B cell (primary cell): ENCODE measurements at regions of chr19 and their contacts with region 1.

Region 1: GRCh38 chr19:16382775-16383543 is 58.3 kb downstream of the KLF2 start:
- DNase-seq: peak; percentile 86
- ATAC-seq: peak; percentile 68
- H3K4me3 ChIP-seq: peak overlapping the region in 4 of 5 experiments; percentile 2 to 33 (median 17)
- H3K4me3 Mint-ChIP-seq: peak overlapping the region; percentile 81
- H3K27ac ChIP-seq: peak overlapping the region; percentile 93 to 95
- H3K27ac Mint-ChIP-seq: peak overlapping the region; percentile 99
- H3K4me1 ChIP-seq: peaks cover 63 to 89% of the 10 kb centered on the region in 2 donors
- H3K4me1 Mint-ChIP-seq: peaks cover 81% of the 10 kb centered on the region
- H3K27me3 ChIP-seq: no peaks in the 10 kb centered on the region
- H3K27me3 Mint-ChIP-seq: no peaks in the 10 kb centered on the region
- CTCF ChIP-seq: peak; percentile 78

Region 2: GRCh38 chr19:16076154-16076957 is 306.6 kb before region 1 on chr19 and contains the start of gene TPM4:
- CTCF ChIA-PET with region 1: no interaction called
- POLR2A ChIA-PET with region 1: no interaction called
- intact Hi-C with region 1: loop called (anchors 10 kb)
- DNase-seq: peak; percentile 93
- ATAC-seq: peak; percentile 60
- H3K4me3 ChIP-seq: peak within 1 kb of the TSS; percentile 56 to 86 (median 73)
- H3K4me3 Mint-ChIP-seq: peak within 1 kb of the TSS; percentile 88
- H3K27ac ChIP-seq: peak within 1 kb of the TSS; percentile 91 to 92
- H3K27ac Mint-ChIP-seq: peak within 1 kb of the TSS; percentile 94
- H3K4me1 ChIP-seq: peaks cover 35 to 56% of the 10 kb centered on the region in 2 donors
- H3K4me1 Mint-ChIP-seq: peaks cover 60% of the 10 kb centered on the region
- H3K27me3 ChIP-seq: no peaks in the 10 kb centered on the region
- H3K27me3 Mint-ChIP-seq: no peaks in the 10 kb centered on the region
- CTCF ChIP-seq: no peak
- total RNA-seq, gene TPM4: 127 TPM in 2 replicates

Region 3: DNA sequence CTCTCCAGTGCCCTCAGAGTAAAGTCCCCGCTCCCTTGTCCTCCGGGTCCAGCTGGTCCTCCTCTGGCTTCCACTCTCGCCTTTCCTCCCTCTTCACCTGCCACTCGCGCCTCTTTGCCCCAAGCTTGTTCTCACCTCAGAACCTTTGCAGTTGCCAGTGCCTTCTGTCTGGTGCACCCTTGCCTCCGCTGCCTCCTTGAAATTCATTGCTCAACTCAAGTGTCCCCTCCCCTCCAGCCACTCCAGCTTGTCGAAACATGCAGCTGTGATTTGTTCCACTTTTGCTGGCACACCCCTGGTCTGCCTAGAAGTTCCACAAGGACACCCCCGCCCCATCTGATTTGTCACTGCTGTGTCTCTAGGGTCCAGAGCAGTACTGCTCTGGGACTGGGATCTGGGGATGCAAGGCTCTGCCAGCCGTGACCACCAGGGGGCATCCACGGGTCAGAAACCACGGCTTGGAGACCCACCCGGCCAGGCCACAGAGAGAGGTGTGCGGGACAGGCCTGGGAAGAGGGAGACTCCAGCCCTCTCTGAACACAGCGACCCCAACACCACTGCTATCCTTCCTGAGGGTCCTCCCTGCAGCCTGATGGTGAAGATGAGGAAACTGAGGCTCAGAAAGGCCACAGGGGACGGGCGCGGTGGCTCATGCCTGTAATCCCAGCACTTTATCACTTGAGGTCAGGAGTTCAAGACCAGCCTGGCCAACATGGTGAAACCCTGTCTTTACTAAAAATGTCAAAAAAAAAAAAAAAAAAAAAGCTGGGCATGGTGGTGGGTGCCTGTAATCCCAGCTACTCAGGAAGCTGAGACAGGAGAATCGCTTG is 135.4 kb before region 1 on chr19:
- CTCF ChIA-PET with region 1: interaction called, 110 read pairs
- POLR2A ChIA-PET with region 1: interaction called, 37 read pairs
- intact Hi-C with region 1: loop called (anchors 1 kb)
- DNase-seq: peak; percentile 88
- ATAC-seq: peak; percentile 88
- H3K4me3 ChIP-seq: no peak overlapping the region
- H3K4me3 Mint-ChIP-seq: peak overlapping the region; percentile 59
- H3K27ac ChIP-seq: peak overlapping the region; percentile 4 to 66
- H3K27ac Mint-ChIP-seq: peak overlapping the region; percentile 88
- H3K4me1 ChIP-seq: peaks cover 34 to 60% of the 10 kb centered on the region in 2 donors
- H3K4me1 Mint-ChIP-seq: peaks cover 34% of the 10 kb centered on the region
- H3K27me3 ChIP-seq: no peaks in the 10 kb centered on the region
- H3K27me3 Mint-ChIP-seq: no peaks in the 10 kb centered on the region
- CTCF ChIP-seq: peak; percentile 87

Region 4: DNA sequence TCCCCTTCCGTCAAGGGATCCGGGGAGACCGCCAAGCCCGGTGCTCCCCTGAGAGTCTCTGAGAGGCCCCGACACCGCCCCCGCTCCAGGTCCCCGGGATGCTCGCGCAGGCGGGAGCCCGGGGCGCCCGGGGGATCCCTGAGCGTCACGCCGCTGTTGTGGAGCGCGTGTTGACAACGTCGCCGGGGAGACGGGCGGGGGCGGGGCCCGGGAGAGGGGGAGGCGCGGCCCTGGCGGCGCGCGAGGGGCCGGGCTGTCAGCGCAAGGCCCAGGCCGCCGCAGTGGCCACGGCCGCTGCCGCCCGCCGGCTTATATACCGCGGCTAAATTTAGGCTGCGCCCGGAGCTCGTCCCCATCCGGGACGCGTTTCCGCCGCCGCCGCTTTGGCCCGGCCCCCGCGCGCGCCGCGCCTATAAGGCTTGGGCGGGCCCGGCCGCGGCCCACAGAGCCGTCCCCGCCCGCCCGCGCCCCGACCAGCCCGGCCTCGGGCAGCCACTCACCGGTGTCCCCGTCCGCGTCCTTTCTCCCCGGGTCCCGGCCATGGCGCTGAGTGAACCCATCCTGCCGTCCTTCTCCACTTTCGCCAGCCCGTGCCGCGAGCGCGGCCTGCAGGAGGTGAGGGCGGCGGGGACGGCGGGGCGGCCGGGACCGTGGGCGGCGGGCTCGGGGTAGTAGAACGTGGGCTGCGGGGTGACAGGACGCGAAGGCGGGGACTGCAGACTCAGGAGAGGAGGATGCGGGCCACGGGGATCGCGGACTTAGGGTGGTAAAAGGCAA is 58.4 kb before region 1 on chr19 and contains the start of gene KLF2:
- CTCF ChIA-PET with region 1: interaction called, 100 read pairs
- POLR2A ChIA-PET with region 1: interaction called, 87 read pairs
- intact Hi-C with region 1: loop called (anchors 1 kb)
- DNase-seq: peak; percentile 99
- ATAC-seq: peak; percentile 59
- H3K4me3 ChIP-seq: peak within 1 kb of the TSS; percentile 35 to 100 (median 98)
- H3K4me3 Mint-ChIP-seq: peak within 1 kb of the TSS; percentile 76
- H3K27ac ChIP-seq: peak within 1 kb of the TSS; percentile 99
- H3K27ac Mint-ChIP-seq: peak within 1 kb of the TSS; percentile 91
- H3K4me1 ChIP-seq: peaks cover 42 to 55% of the 10 kb centered on the region in 2 donors
- H3K4me1 Mint-ChIP-seq: peaks cover 61% of the 10 kb centered on the region
- H3K27me3 ChIP-seq: no peaks in the 10 kb centered on the region
- H3K27me3 Mint-ChIP-seq: no peaks in the 10 kb centered on the region
- CTCF ChIP-seq: no peak
- total RNA-seq, gene KLF2: 241 and 242 TPM in 2 replicates

Region 5: DNA sequence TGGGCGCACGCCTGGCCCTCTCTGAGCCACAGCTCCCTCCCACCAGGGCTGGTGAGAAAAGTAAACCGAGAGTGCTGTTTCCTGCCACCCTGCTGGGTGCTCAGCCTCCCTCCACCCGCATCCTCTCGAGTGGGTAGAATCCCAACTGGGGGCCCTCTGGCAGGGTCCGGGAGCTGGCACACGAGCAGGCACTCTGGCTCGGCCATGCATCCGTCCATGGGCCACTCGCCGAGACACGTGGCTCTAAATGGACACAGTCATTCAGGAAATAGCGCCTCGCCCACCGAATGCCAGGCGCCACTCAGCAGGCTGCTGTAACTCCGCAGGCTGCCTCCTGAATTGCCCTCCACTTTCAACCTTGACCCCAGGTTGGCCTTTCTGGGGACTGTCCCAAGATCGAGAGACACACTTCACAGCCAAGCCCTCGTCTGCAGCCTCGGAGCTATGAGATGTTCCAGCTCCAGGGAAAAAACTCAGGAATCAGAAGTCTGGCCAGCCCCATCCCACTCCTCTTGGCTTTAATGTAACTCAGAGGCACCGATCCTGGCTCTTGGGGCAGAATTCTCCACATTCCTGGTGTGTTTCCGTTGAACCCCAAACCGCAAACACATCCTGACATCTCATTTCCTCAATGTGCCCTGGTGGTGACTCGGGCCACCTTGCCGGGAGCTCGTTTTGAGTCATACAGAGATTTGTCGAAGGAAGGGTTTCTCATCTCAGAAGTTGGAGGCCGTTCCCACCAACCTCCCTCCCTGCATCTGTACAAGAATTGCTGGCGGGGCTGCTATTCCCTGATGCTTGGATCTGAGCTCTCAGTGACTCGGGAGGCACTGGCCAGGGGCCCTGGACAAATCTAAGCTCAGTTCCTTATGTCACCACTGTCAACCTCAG is 44.2 kb before region 1 on chr19:
- CTCF ChIA-PET with region 1: interaction called, 11 read pairs
- POLR2A ChIA-PET with region 1: interaction called, 9 read pairs
- intact Hi-C with region 1: loop called (anchors 1 kb)
- DNase-seq: peak; percentile 64
- ATAC-seq: no peak
- H3K4me3 ChIP-seq: peak overlapping the region in 4 of 5 experiments; percentile 10 to 49 (median 29)
- H3K4me3 Mint-ChIP-seq: peak overlapping the region; percentile 83
- H3K27ac ChIP-seq: peak overlapping the region; percentile 27 to 39
- H3K27ac Mint-ChIP-seq: peak overlapping the region; percentile 87
- H3K4me1 ChIP-seq: peaks cover 53 to 71% of the 10 kb centered on the region in 2 donors
- H3K4me1 Mint-ChIP-seq: peaks cover 61% of the 10 kb centered on the region
- H3K27me3 ChIP-seq: no peaks in the 10 kb centered on the region
- H3K27me3 Mint-ChIP-seq: no peaks in the 10 kb centered on the region
- CTCF ChIP-seq: peak; percentile 14

Region 6: DNA sequence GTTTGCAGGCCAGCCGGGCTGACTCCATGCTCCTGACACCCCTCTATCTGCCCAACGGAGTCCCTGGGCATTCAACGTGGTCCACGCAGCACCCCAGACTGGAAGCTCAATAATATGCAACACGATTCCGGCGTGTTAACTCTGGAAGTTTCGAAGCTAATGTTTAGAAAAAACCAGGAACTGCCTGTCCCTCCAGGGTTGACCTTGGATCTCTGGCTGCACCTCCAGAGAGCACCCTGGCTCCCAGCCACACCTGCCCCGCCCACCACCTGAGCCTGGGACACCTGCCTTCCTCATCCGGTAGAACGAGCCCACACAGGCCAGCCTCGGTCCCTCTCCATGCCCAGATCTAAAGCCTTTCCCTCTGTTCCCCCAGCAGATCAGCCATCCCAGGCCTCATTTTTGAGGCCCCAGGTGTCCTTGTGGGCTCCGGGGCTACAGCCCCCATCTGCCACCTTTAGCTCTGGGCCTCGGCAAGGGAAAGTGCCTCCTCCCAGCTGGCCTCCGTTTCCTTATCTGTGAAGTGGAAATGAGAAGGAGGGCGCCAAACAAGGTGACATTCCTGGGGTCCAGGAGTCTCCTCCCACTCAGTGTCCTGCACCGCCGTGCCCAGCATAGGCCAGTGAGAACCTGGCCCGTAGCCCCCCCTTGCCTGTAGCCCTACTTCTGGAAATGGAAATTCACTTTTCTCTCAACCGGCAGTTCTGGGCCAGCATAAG is 19.7 kb before region 1 on chr19:
- CTCF ChIA-PET with region 1: interaction called, 57 read pairs
- POLR2A ChIA-PET with region 1: interaction called, 43 read pairs
- intact Hi-C with region 1: loop called (anchors 1 kb)
- DNase-seq: peak; percentile 3
- ATAC-seq: no peak
- H3K4me3 ChIP-seq: no peak overlapping the region
- H3K4me3 Mint-ChIP-seq: peak overlapping the region; percentile 19
- H3K27ac ChIP-seq: no peak overlapping the region
- H3K27ac Mint-ChIP-seq: peak overlapping the region; percentile 53
- H3K4me1 ChIP-seq: peaks cover 82 to 98% of the 10 kb centered on the region in 2 donors
- H3K4me1 Mint-ChIP-seq: peaks cover 83% of the 10 kb centered on the region
- H3K27me3 ChIP-seq: no peaks in the 10 kb centered on the region
- H3K27me3 Mint-ChIP-seq: no peaks in the 10 kb centered on the region
- CTCF ChIP-seq: no peak

Region 7: GRCh38 chr19:16394681-16395375 is 11.9 kb after region 1 on chr19:
- CTCF ChIA-PET with region 1: interaction called, 34 read pairs
- POLR2A ChIA-PET with region 1: interaction called, 13 read pairs
- intact Hi-C with region 1: loop called (anchors 1 kb)
- DNase-seq: no peak
- ATAC-seq: no peak
- H3K4me3 ChIP-seq: no peak overlapping the region
- H3K4me3 Mint-ChIP-seq: no peak overlapping the region
- H3K27ac ChIP-seq: peak overlapping the region in 1 of 2 donors; percentile 2
- H3K27ac Mint-ChIP-seq: peak overlapping the region; percentile 79
- H3K4me1 ChIP-seq: peaks cover 48 to 57% of the 10 kb centered on the region in 2 donors
- H3K4me1 Mint-ChIP-seq: peaks cover 54% of the 10 kb centered on the region
- H3K27me3 ChIP-seq: no peaks in the 10 kb centered on the region
- H3K27me3 Mint-ChIP-seq: no peaks in the 10 kb centered on the region
- CTCF ChIP-seq: no peak

Region 8: GRCh38 chr19:16542045-16542909 is 159.3 kb after region 1 on chr19 and contains the start of gene CHERP:
- CTCF ChIA-PET with region 1: no interaction called
- POLR2A ChIA-PET with region 1: no interaction called
- intact Hi-C with region 1: no loop called
- DNase-seq: peak; percentile 97
- ATAC-seq: peak; percentile 81
- H3K4me3 ChIP-seq: peak within 1 kb of the TSS; percentile 76 to 90 (median 88)
- H3K4me3 Mint-ChIP-seq: peak within 1 kb of the TSS; percentile 91
- H3K27ac ChIP-seq: peak within 1 kb of the TSS; percentile 61 to 77
- H3K27ac Mint-ChIP-seq: peak within 1 kb of the TSS; percentile 89
- H3K4me1 ChIP-seq: peaks cover 29 to 52% of the 10 kb centered on the region in 2 donors
- H3K4me1 Mint-ChIP-seq: peaks cover 55% of the 10 kb centered on the region
- H3K27me3 ChIP-seq: no peaks in the 10 kb centered on the region
- H3K27me3 Mint-ChIP-seq: no peaks in the 10 kb centered on the region
- CTCF ChIP-seq: no peak
- total RNA-seq, gene CHERP: 87.3 and 98.9 TPM in 2 replicates

Region 9: GRCh38 chr19:16561382-16561781 is 178.4 kb after region 1 on chr19:
- CTCF ChIA-PET with region 1: no interaction called
- POLR2A ChIA-PET with region 1: no interaction called
- intact Hi-C with region 1: no loop called
- DNase-seq: no peak
- ATAC-seq: no peak
- H3K4me3 ChIP-seq: no peak overlapping the region
- H3K4me3 Mint-ChIP-seq: no peak overlapping the region
- H3K27ac ChIP-seq: no peak overlapping the region
- H3K27ac Mint-ChIP-seq: no peak overlapping the region
- H3K4me1 ChIP-seq: peaks cover 6 to 8% of the 10 kb centered on the region in 2 donors
- H3K4me1 Mint-ChIP-seq: peaks cover 4% of the 10 kb centered on the region
- H3K27me3 ChIP-seq: no peaks in the 10 kb centered on the region
- H3K27me3 Mint-ChIP-seq: no peaks in the 10 kb centered on the region
- CTCF ChIP-seq: no peak